IMR-90 (cell line): ENCODE measurements at regions of chr19 and their contacts with region 1.

Region 1: DNA sequence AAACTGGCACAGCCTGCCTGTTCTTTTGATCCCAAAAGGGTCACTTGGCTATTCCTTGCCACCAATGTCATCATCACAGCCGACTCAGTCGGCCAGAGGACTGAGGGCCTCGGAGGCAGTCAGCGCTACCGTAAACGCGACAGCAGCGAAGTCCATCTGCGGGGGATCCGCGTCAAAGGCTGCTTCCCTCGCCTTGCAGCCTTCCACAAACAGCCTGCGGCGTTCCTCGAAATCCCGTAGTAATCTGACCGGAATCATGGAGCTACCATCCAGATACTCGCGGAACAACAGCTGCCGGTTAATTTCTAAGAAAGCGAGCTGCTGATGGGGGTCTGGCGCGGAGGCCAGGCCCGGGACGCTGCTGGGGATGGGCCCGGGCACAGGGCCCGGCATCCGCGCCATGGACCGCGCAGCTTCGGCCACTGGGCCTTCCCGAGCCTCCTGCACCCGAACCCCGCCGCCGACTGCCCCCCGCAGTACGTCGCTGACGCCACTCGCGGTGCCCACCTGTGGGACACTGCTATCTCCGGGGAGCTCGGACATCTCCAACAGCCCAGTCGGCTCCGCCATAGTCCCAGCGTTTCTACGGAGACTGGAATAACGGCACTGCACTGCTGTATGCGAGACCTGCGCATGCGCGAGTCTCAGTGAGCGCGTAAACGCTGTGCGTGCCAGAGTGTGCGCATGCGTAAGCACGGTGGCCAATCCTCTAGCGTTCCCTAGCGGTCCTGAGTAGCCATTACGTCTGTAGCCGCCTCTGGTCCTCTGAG is at the start of gene EID2B:
- DNase-seq: peak; percentile 95
- ATAC-seq: peak; percentile 95
- H3K4me3 ChIP-seq: peak within 1 kb of the TSS; percentile 65
- H3K27ac ChIP-seq: peak within 1 kb of the TSS; percentile 51
- H3K4me1 ChIP-seq: no peaks in the 10 kb centered on the region
- H3K27me3 ChIP-seq: no peaks in the 10 kb centered on the region
- CTCF ChIP-seq: peak; percentile 99
- POLR2A ChIP-seq: peak; percentile 30
- RAD21 ChIP-seq: peak; percentile 100
- total RNA-seq, gene EID2B: 2.7 and 4.2 TPM in 2 replicates

Region 2: DNA sequence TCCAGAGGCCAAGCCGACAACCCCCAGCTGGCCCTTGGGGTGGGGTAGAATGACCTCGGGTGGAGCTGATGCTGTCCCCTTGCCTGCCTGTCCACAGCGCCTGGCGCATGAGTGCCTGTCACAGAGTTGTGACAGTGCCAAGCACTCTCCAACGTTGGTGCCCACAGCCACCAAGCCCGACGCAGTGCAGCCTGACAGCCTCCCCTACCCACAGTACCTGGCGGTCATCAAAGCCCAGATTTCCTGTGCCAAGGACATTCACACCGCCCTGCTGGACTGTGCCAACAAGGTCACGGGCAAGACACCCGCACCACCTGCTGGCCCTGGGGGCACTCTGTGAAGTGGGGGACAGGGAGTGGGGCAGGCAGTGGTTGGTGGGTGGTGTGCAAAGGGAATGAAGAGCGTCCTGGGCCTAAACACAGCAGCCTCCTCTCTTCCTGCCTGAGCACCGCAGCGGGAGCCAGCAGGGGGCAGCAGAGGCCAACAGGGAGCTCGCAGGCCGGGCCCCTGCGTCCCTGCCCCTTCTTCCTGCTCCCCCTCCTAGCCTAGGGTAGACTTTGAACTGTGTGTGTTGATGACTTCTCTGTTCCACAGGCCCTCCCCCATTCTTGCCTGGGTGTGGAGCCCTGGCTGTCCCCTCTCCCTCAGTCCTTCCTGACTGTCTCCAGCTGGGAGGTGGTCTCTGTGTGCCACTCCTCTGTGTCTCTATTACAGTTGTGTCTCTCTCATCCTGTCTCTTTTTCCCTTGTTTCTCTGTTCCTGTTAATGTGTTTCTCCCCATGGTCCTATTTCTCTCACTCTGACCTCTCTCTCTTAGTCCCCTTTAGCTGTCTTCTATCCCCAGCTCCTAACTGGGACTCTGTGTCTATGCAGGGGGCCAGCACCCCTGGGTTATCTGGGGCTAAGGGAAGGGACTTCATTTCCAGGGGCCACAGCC is 134.8 kb before region 1 on chr19:
- CTCF ChIA-PET with region 1: no interaction called
- POLR2A ChIA-PET with region 1: no interaction called
- dilution Hi-C with region 1: no loop called
- in situ Hi-C with region 1: no loop called
- intact Hi-C with region 1: loop called (anchors 1 kb)
- DNase-seq: peak; percentile 76
- ATAC-seq: peak; percentile 81
- H3K4me3 ChIP-seq: no peak overlapping the region
- H3K27ac ChIP-seq: peak overlapping the region; percentile 79
- H3K4me1 ChIP-seq: peaks cover 20% of the 10 kb centered on the region
- H3K27me3 ChIP-seq: no peaks in the 10 kb centered on the region
- CTCF ChIP-seq: peak; percentile 96
- POLR2A ChIP-seq: peak; percentile 66
- RAD21 ChIP-seq: peak; percentile 96

Region 3: GRCh38 chr19:39445265-39446111 is 86.9 kb before region 1 on chr19 and contains the start of gene SUPT5H:
- CTCF ChIA-PET with region 1: interaction called, 10 read pairs
- POLR2A ChIA-PET with region 1: interaction called, 14 read pairs
- dilution Hi-C with region 1: no loop called
- in situ Hi-C with region 1: no loop called
- intact Hi-C with region 1: loop called (anchors 1 kb)
- DNase-seq: peak; percentile 97
- ATAC-seq: peak; percentile 96
- H3K4me3 ChIP-seq: peak within 1 kb of the TSS; percentile 83
- H3K27ac ChIP-seq: peak within 1 kb of the TSS; percentile 96
- H3K4me1 ChIP-seq: peaks cover 5% of the 10 kb centered on the region
- H3K27me3 ChIP-seq: no peaks in the 10 kb centered on the region
- CTCF ChIP-seq: no peak
- POLR2A ChIP-seq: peak; percentile 94
- RAD21 ChIP-seq: no peak
- total RNA-seq, gene SUPT5H: 75.3 and 86.9 TPM in 2 replicates

Region 4: DNA sequence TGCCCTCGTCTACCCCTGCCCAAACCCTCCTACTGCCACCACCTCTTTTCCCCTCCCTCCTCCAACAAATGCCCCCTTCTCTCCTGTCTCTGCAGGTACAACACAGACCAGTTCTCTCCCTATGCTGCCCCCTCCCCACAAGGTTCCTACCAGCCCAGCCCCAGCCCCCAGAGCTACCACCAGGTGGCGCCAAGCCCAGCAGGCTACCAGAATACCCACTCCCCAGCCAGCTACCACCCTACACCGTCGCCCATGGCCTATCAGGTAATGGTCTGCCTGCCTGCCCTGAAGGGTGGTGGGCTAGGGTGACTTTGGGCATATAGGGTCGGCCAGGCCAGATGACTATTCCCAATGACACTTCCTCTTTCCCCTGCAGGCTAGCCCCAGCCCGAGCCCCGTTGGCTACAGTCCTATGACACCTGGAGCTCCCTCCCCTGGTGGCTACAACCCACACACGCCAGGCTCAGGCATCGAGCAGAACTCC is 58.2 kb before region 1 on chr19:
- CTCF ChIA-PET with region 1: interaction called, 3 read pairs
- POLR2A ChIA-PET with region 1: no interaction called
- dilution Hi-C with region 1: no loop called
- in situ Hi-C with region 1: no loop called
- intact Hi-C with region 1: loop called (anchors 1 kb)
- DNase-seq: peak; percentile 22
- ATAC-seq: peak; percentile 75
- H3K4me3 ChIP-seq: no peak overlapping the region
- H3K27ac ChIP-seq: no peak overlapping the region
- H3K4me1 ChIP-seq: no peaks in the 10 kb centered on the region
- H3K27me3 ChIP-seq: no peaks in the 10 kb centered on the region
- CTCF ChIP-seq: peak; percentile 67
- POLR2A ChIP-seq: no peak
- RAD21 ChIP-seq: peak; percentile 50

Region 5: GRCh38 chr19:39480337-39481228 is 51.8 kb before region 1 on chr19 and contains the start of gene TIMM50:
- CTCF ChIA-PET with region 1: no interaction called
- POLR2A ChIA-PET with region 1: no interaction called
- dilution Hi-C with region 1: no loop called
- in situ Hi-C with region 1: no loop called
- intact Hi-C with region 1: loop called (anchors 2 kb)
- DNase-seq: peak; percentile 88
- ATAC-seq: peak; percentile 99
- H3K4me3 ChIP-seq: peak within 1 kb of the TSS; percentile 75
- H3K27ac ChIP-seq: peak within 1 kb of the TSS; percentile 88
- H3K4me1 ChIP-seq: peaks cover 9% of the 10 kb centered on the region
- H3K27me3 ChIP-seq: no peaks in the 10 kb centered on the region
- CTCF ChIP-seq: no peak
- POLR2A ChIP-seq: peak; percentile 83
- RAD21 ChIP-seq: no peak
- total RNA-seq, gene TIMM50: 52.0 and 53.3 TPM in 2 replicates

Region 6: GRCh38 chr19:39497996-39498797 is 34.2 kb before region 1 on chr19:
- CTCF ChIA-PET with region 1: interaction called, 5 read pairs
- POLR2A ChIA-PET with region 1: no interaction called
- dilution Hi-C with region 1: no loop called
- in situ Hi-C with region 1: no loop called
- intact Hi-C with region 1: loop called (anchors 5 kb)
- DNase-seq: peak; percentile 19
- ATAC-seq: peak; percentile 77
- H3K4me3 ChIP-seq: peak overlapping the region; percentile 24; the same call in 1 of the 2 replicates
- H3K27ac ChIP-seq: no peak overlapping the region
- H3K4me1 ChIP-seq: peaks cover 3% of the 10 kb centered on the region; the same call in 1 of the 2 replicates
- H3K27me3 ChIP-seq: peaks cover 36% of the 10 kb centered on the region
- CTCF ChIP-seq: peak; percentile 49
- POLR2A ChIP-seq: no peak
- RAD21 ChIP-seq: peak; percentile 39